Left cardiac atrium (tissue), 4 donors: ENCODE measurements at regions of chr1 and their contacts with region 1.

Region 1: DNA sequence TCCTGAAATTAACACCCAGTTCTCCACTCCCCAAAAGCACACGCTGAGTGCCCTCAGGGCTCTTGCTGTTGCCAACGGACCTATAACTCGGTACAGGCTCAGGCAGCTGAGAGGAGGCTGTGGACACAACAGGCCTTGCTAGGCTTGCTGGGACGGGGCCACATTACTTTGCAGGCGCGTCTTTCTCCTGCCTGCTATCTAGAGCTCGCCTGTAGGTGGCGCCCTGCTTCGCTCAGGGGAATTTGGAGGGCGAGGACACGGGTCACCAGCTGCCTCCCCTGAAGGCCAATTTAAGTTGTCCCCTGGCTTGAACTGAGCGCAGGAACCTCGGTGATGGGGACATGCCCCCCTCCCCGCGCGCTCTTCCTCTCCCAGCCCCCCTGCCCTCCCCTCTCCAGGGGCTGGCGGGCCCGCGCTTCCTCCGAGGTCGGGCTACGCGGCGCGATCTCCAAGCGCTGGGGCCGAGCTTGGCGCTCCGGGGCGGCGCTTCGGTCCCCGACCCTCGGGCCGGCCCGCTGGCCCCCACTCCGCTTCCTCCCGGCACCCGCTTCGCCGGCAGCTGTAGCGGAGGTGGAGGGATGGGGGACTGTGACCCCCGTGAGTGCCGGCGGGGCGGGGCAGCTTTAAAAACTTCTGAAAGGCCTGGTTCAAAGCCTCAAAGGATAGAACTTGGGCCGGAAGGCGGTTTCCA is 32.4 kb upstream of the NFIA start:
- DNase-seq: peak; percentile 93
- ATAC-seq: peak; percentile 80 to 83

Region 2: GRCh38 chr1:60960891-60961461 is 89.0 kb before region 1 on chr1:
- intact Hi-C with region 1: no loop called
- DNase-seq: peak; percentile 27
- ATAC-seq: peak; percentile 23 to 52

Region 3: DNA sequence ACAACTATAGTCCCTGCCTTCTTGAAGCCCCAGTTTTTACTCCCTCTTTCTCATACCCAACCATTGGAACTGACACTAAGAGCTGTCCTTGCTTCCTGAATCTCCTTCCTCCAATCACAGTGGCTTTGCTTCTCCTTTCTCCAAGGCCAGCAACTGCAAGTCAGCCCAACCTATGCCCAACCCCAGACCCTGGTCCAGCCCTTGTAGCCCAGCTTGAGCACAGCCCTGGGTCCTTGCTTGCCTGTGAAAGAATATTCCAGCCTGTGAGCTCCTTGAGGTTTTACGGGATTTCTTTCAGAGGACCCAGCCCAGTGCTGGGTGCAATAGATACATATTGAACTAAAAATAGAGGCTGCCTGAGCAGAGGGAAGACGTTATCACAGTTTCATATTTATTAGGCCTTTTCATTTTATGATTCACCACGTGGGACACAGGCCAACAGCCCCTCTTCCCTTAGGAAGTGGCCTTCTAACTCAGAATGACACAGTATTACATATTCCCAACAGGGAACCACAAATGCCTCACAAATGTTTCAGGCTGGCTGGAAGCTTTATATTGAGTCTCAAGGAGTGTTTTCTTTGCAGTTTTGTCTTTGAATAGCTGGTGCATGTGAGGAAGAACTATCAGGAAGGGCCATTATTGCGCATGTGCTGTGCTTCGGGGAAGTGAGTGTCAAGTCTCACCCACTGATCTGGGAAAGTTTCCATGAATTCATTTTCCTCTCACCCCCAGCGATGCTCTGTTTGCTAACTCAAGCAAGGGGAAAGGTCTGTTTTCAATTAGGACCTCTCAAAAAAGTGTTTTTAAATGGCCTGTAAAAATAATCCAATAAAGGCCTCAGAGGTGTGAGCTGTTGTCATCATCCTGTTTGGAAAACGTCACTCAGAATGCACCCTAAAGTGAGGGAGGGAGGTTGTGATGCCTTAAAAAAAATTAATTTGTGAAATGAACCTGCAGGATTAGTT is 60.0 kb before region 1 on chr1:
- intact Hi-C with region 1: loop called in 1 of 2 experiments (anchors 10 kb)
- DNase-seq: peak; percentile 75
- ATAC-seq: peak; percentile 63 to 79

Region 4: DNA sequence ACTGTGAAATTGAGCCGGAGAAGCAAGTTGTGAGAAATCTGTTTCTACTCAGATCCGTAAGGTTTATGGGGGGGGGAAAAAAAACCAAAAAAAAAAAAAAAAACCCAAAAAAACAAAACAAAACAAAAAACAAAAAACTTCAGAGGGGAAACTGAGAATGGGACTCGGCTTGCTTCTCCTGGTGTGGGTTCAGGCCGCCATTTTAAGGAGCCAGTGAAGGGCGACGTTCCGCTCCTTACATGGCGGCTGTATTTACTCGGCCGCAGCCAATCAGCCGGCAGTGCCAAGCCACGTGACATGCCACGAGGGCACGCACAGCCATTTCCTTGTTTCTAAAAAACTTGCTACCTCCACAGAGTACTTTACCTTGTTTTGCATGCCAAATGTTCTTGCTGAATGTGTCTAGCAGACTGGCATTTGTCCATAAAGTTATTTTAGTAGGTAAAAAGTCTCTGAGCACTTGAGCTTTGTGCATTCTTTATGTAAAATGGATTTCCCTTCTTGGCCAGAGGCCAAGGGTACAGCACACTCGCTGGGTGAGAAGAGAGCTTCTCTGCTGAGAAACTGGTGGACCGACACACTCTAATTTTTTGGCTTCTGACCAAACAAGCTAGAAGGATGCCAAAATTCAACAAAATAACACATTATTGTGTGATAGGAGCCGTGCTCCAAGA is 134.2 kb after region 1 on chr1:
- intact Hi-C with region 1: loop called in 1 of 2 experiments (anchors 10 kb)
- DNase-seq: peak; percentile 95
- ATAC-seq: peak; percentile 95 to 96

Region 5: DNA sequence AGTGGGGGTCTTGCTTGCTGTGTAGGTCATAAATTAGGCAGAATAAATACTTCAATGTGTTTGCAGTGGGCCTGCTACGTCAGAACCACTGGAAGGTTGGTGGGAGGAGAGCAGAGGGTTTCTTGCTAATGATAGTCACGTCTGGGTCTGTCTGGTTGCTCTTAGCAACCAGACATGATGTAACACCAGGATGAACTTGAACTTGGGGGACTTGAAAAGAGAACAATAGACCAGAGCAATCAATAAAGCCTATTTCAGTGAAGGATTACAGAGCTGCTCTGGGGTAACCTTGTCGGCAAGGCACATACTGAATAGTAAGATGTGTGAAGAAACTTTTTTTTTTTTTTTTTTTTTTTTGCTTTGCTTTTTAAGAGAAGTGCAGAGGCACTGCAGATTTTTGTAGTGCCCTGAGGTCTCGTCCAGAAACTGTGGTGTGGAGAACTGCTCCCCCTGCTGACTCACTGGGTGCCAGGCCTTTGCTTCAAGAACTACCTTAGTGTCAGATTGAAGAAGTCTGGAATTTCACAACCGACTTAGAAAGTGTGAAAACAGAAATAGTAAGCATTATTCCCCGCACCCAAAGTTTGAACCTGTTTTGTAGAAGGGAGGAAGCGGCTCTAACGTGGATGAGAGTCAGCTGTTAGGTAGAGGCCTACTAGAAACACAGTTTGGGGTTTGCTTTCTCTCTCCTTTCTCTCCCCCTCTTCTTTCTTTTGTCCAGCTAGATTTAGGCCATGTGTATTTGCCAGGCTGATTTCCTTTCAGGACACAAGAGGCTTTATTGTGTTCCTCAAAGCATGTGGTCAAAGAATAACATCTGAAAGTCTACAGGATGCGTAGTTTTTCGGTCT is 403.3 kb after region 1 on chr1:
- intact Hi-C with region 1: loop called (anchors 2 to 10 kb)
- DNase-seq: peak; percentile 90
- ATAC-seq: peak; percentile 67 to 88

Region 6: DNA sequence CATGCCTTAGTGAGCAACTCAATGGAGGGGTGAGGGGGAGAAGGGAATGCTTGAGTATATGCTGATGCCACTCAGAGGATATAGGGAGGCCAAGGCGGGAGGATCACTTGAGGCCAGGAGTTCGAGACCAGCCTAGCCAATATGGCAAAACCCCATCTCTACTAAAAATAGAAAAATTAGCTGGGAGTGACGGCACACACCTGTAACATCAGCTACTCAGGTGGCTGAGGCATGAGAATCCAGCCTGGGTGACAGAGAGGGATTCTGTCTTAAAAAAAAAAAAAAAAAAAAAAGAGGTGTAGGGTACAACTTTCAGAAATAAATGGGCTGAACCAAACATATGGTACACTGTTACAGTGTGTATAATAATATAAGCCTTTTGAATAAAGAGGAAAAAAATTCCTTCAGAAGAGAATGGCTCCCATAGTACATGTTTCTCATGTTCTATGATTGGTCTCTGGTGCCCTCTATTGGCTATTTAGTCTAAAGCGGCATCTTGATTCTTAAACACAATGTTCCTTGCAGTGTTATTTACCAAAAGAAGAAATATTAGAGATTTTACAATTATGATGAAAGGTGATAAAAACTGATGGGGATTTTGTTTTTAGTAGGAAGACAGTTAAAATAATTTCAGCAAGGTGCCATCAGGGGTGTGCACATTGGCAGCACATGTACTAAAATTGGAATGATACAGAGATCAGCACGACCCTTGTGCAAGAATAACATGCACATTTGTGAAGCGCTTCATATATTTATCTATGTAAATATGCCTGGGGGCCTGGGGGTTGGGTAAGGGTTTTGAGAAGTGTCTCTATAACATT is 802.1 kb after region 1 on chr1:
- intact Hi-C with region 1: loop called in 1 of 2 experiments (anchors 10 kb)
- DNase-seq: no peak
- ATAC-seq: peak; percentile 72 to 78